ENCODE measurements at regions of chr4 and their contacts with region 1.

Region 1: DNA sequence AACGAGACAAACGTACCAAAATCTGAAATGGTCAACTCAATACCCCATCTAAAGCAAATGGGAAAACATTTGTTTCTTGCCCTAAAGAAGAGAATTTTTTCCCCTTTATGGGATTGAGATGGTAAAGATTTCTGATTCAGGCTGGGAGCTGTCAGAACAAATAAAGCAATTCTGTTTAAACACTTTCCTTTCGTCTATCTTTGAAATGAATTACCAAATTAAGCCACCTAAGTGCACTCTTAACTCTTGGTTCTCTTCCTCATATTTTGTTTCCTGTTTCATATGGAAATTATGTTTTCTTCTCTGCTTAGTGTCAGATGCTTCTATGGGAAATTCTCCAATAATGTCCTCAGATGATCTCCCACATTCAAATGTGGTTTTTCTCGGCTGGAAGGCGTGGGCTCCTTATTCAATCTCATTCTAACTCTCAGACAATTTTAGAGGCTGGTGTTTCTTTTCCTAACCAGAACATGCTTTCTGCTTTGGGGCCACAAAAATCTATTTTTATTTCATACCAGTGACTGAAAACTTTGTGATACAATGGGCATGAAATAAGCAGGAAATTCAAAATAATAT is 50.3 kb upstream of the HPF1 start:
- DNase-seq: no peak
- H3K4me3 ChIP-seq: no peak overlapping the region
- H3K27ac ChIP-seq: no peak overlapping the region
- H3K4me1 ChIP-seq: peaks cover 0 to 4% (median 0%) of the 10 kb centered on the region in 4 donors
- H3K27me3 ChIP-seq: peaks cover 0 to 3% (median 0%) of the 10 kb centered on the region in 3 donors
- CTCF ChIP-seq: no peak
- EP300 ChIP-seq: no peak
- POLR2A ChIP-seq: no peak

Region 2: GRCh38 chr4:168528131-168528949 is 1279.7 kb before region 1 on chr4:
- intact Hi-C with region 1: no loop called
- DNase-seq: no peak
- H3K4me3 ChIP-seq: no peak overlapping the region
- H3K27ac ChIP-seq: no peak overlapping the region
- H3K4me1 ChIP-seq: no peaks in the 10 kb centered on the region
- H3K27me3 ChIP-seq: no peaks in the 10 kb centered on the region
- CTCF ChIP-seq: no peak
- EP300 ChIP-seq: no peak
- POLR2A ChIP-seq: no peak

Region 3: DNA sequence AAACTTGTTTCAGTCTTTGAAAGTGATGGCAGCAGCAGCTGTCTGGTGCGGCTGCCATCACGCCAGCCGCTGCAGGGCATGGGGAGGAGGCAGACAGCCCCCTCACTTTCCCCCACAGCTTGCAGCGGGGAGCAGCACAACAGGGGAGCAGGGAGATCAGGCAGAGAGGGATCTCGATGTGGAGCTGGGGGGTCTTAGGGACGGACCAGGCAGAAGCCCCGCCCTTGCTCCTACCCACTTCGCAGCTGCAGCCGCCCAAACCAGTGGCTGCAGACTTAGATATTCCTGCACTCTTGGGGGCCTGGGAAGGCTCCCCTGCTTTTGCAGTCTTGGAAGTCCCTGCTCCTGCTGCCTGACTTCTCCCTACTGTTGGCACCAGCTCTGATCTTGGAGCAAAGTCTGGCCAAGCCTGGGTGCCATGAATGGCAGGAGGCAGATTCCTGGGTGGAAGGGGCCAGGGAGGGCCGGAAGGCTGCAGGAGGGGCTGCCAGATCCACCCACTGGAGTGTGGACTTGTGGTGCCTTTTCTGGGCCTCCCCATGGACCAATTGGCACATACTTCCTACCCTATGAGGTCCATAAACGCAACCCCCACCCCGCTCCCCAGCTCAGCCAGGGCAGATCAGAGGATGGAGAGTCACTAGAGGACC is 232.1 kb after region 1 on chr4:
- intact Hi-C with region 1: loop called (anchors 5 kb)
- DNase-seq: no peak
- H3K4me3 ChIP-seq: no peak overlapping the region
- H3K27ac ChIP-seq: no peak overlapping the region
- H3K4me1 ChIP-seq: no peaks in the 10 kb centered on the region
- H3K27me3 ChIP-seq: peaks cover 0 to 7% (median 0%) of the 10 kb centered on the region in 3 donors
- CTCF ChIP-seq: no peak
- EP300 ChIP-seq: no peak
- POLR2A ChIP-seq: no peak